GM12878 (cell line): ENCODE measurements at regions of chr20 and their contacts with region 1.

Region 1: GRCh38 chr20:4592316-4593148 is 129.2 kb upstream of the PRND start:
- DNase-seq: no peak
- ATAC-seq: peak; percentile 87
- H3K4me3 ChIP-seq: no peak overlapping the region
- H3K27ac ChIP-seq: no peak overlapping the region
- H3K4me1 ChIP-seq: no peaks in the 10 kb centered on the region
- H3K27me3 ChIP-seq: no peaks in the 10 kb centered on the region
- CTCF ChIP-seq: peak; percentile 69 to 77 (median 74); a peak in 5 of 6 replicates
- EP300 ChIP-seq: no peak
- POLR2A ChIP-seq: no peak
- RAD21 ChIP-seq: peak; percentile 71

Region 2: DNA sequence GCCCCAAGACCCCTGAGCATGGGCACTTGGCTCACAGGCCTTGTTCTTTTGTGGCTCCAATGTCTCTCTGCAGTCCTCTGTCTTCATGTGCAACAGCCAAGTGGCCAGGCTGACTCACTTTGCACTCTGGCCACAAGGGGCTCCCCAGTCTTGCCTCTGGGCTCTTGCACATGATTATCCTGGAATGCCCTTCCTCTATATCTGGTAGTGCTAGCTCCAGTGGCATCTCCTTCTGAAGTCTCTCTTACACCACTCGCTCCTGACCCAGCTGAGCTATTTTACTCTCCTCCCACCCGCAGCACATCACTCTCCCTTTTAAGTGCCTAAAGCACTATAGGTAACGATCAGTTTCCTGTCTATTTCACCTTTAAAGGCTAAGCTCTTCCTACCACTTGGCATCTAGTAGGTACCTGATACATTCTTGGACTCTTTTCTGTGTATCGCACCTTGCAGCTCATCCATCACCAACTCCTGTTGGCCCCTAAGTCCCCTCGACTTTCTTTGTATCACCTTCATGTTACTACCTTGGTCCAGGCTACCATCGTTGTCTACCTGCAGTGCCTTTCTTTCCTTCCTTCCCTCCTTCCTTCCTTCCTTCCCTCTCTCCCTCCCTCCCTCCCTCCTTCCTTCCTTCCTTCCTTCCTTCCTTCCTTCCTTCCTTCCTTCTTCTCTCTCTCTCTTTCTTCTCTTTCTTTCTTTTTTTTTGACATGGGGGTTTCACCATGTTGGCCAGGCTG is 365.3 kb before region 1 on chr20:
- CTCF ChIA-PET with region 1: interaction called, 4 read pairs
- POLR2A ChIA-PET with region 1: no interaction called
- RAD21 ChIA-PET with region 1: no interaction called
- SMC1A ChIA-PET with region 1: no interaction called
- in situ Hi-C with region 1: no loop called
- intact Hi-C with region 1: loop called (anchors 5 kb)
- DNase-seq: no peak
- ATAC-seq: peak; percentile 58; the same call in 2 of the 3 replicates
- H3K4me3 ChIP-seq: no peak overlapping the region
- H3K27ac ChIP-seq: no peak overlapping the region
- H3K4me1 ChIP-seq: no peaks in the 10 kb centered on the region
- H3K27me3 ChIP-seq: peaks cover 0 to 2% of the 10 kb centered on the region in 2 experiments; a peak in 1 of 4 replicates
- CTCF ChIP-seq: peak; percentile 37 to 51 (median 41)
- EP300 ChIP-seq: no peak
- POLR2A ChIP-seq: no peak
- RAD21 ChIP-seq: no peak

Region 3: GRCh38 chr20:4369798-4370124 is 222.8 kb before region 1 on chr20:
- CTCF ChIA-PET with region 1: no interaction called
- POLR2A ChIA-PET with region 1: no interaction called
- RAD21 ChIA-PET with region 1: no interaction called
- SMC1A ChIA-PET with region 1: no interaction called
- in situ Hi-C with region 1: no loop called
- intact Hi-C with region 1: no loop called
- DNase-seq: peak; percentile 27
- ATAC-seq: peak; percentile 48; the same call in 2 of the 3 replicates
- H3K4me3 ChIP-seq: no peak overlapping the region
- H3K27ac ChIP-seq: peak overlapping the region; percentile 15
- H3K4me1 ChIP-seq: peaks cover 4% of the 10 kb centered on the region; the same call in 1 of the 2 replicates
- H3K27me3 ChIP-seq: no peaks in the 10 kb centered on the region
- CTCF ChIP-seq: no peak
- EP300 ChIP-seq: no peak
- POLR2A ChIP-seq: no peak
- RAD21 ChIP-seq: no peak